ENCODE measurements at regions of chrX and their contacts with region 1.

Region 1: GRCh38 chrX:53458082-53458481 is 23.9 kb upstream of the HSD17B10 start:
- DNase-seq: peak; percentile 32
- ATAC-seq: no peak; the same call in 1 of the 2 replicates
- H3K4me3 ChIP-seq: no peak overlapping the region
- H3K27ac ChIP-seq: no peak overlapping the region
- H3K4me1 ChIP-seq: peaks cover 2% of the 10 kb centered on the region; the same call in 1 of the 2 replicates
- H3K27me3 ChIP-seq: peaks cover 11% of the 10 kb centered on the region
- CTCF ChIP-seq: peak; percentile 34
- POLR2A ChIP-seq: no peak
- RAD21 ChIP-seq: peak; percentile 28; the same call in 1 of the 2 replicates

Region 2: DNA sequence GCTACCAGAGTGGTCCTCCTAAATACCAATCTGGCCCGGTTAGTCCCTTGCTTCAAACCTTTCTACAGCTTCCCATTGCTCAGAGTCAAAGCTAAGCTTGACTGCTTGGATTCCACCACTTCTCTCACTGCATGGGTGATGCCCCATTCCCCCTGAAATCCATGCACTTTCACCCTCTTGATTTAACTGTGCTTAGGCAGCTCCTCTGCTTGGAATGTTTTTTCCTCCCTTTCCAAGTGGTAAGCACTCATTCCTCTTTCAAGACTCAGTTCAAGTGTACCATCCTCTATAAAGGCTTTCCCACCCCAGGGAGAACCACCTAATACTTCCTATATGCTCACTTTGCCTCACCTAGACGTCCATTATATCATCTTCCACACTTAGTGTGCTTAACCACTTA is 84.8 kb before region 1 on chrX:
- CTCF ChIA-PET with region 1: no interaction called
- POLR2A ChIA-PET with region 1: no interaction called
- dilution Hi-C with region 1: no loop called
- in situ Hi-C with region 1: no loop called
- intact Hi-C with region 1: no loop called
- DNase-seq: no peak
- ATAC-seq: no peak
- H3K4me3 ChIP-seq: no peak overlapping the region
- H3K27ac ChIP-seq: no peak overlapping the region
- H3K4me1 ChIP-seq: peaks cover 2% of the 10 kb centered on the region; the same call in 1 of the 2 replicates
- H3K27me3 ChIP-seq: peaks cover 5% of the 10 kb centered on the region; the same call in 1 of the 2 replicates
- CTCF ChIP-seq: no peak
- POLR2A ChIP-seq: no peak
- RAD21 ChIP-seq: no peak

Region 3: DNA sequence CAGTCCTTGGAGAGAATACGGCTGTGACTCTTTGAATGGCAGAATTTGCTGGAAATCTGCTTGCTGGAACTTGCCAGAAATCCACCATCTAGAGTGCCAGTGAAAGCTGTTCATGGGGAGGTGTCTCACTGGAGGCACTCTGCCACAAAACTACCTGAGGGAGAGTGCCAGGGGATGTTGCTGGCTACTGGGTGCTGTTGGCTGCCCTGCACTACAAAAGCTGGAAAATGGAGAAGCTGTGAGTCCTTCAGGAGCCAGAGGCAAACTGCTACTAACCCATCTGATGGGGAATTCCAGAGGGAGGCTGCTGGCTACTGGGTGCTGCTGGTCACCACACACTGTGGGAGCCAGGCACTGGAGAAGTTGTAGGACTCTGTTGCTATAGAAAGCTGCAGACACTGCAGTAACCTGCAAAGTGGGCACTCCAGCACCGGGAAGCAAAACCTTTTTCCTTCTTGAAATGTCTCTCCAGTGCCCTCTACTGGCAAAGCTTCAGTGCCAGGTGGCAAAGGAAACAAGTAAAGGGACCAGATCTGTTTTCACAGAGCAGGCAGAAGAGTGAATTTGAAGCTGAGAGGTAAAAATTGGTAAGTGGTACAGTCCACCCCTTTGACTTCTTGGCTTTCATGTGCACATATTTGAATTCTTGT is 23.9 kb after region 1 on chrX:
- CTCF ChIA-PET with region 1: interaction called, 15 read pairs
- POLR2A ChIA-PET with region 1: no interaction called
- dilution Hi-C with region 1: no loop called
- in situ Hi-C with region 1: no loop called
- intact Hi-C with region 1: no loop called
- DNase-seq: peak; percentile 69
- ATAC-seq: peak; percentile 85
- H3K4me3 ChIP-seq: no peak overlapping the region
- H3K27ac ChIP-seq: no peak overlapping the region
- H3K4me1 ChIP-seq: no peaks in the 10 kb centered on the region
- H3K27me3 ChIP-seq: peaks cover 24% of the 10 kb centered on the region
- CTCF ChIP-seq: peak; percentile 74
- POLR2A ChIP-seq: no peak
- RAD21 ChIP-seq: peak; percentile 63

Region 4: GRCh38 chrX:53526999-53527398 is 68.9 kb after region 1 on chrX:
- CTCF ChIA-PET with region 1: no interaction called
- POLR2A ChIA-PET with region 1: interaction called, 12 read pairs
- dilution Hi-C with region 1: no loop called
- in situ Hi-C with region 1: no loop called
- intact Hi-C with region 1: no loop called
- DNase-seq: no peak
- ATAC-seq: no peak
- H3K4me3 ChIP-seq: no peak overlapping the region
- H3K27ac ChIP-seq: no peak overlapping the region
- H3K4me1 ChIP-seq: no peaks in the 10 kb centered on the region
- H3K27me3 ChIP-seq: peaks cover 7% of the 10 kb centered on the region
- CTCF ChIP-seq: no peak
- POLR2A ChIP-seq: no peak
- RAD21 ChIP-seq: no peak

Region 5: GRCh38 chrX:53544940-53545339 is 86.9 kb after region 1 on chrX:
- CTCF ChIA-PET with region 1: no interaction called
- POLR2A ChIA-PET with region 1: no interaction called
- dilution Hi-C with region 1: no loop called
- in situ Hi-C with region 1: no loop called
- intact Hi-C with region 1: no loop called
- DNase-seq: no peak
- ATAC-seq: no peak
- H3K4me3 ChIP-seq: no peak overlapping the region
- H3K27ac ChIP-seq: no peak overlapping the region
- H3K4me1 ChIP-seq: no peaks in the 10 kb centered on the region
- H3K27me3 ChIP-seq: peaks cover 12% of the 10 kb centered on the region; the same call in 1 of the 2 replicates
- CTCF ChIP-seq: no peak
- POLR2A ChIP-seq: no peak
- RAD21 ChIP-seq: no peak

Region 6: DNA sequence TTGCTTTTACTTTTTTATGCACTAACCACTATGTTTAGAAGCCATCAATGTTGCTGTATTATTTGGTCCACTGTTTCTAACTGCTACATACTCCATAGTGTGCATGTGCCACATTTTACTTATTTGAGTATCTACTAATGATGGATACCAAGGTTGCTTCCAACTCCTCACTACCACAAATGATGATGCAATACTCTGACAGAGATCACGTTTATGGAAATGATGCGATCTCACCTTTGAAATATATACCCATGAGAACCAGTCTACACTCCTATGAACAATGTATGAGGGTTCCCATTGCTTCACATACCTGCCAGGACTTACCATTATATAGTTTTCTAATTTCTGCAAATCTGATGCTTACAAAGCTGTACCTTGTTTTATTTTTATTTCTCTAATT is 184.3 kb after region 1 on chrX:
- CTCF ChIA-PET with region 1: no interaction called
- POLR2A ChIA-PET with region 1: no interaction called
- dilution Hi-C with region 1: no loop called
- in situ Hi-C with region 1: no loop called
- intact Hi-C with region 1: no loop called
- DNase-seq: no peak
- ATAC-seq: no peak
- H3K4me3 ChIP-seq: no peak overlapping the region
- H3K27ac ChIP-seq: no peak overlapping the region
- H3K4me1 ChIP-seq: no peaks in the 10 kb centered on the region
- H3K27me3 ChIP-seq: no peaks in the 10 kb centered on the region; the same call in 1 of the 2 replicates
- CTCF ChIP-seq: no peak
- POLR2A ChIP-seq: no peak
- RAD21 ChIP-seq: no peak

Measured in IMR-90 (cell line).